ENCODE measurements at regions of chr6 and their contacts with region 1.

Region 1: GRCh38 chr6:41920921-41921711 is at the starts of genes BYSL and MED20:
- DNase-seq: peak; percentile 93 to 96
- ATAC-seq: peak; percentile 98 to 99 (median 98)
- H3K4me3 ChIP-seq: peak within 1 kb of the TSS; percentile 57 to 91 (median 76)
- H3K27ac ChIP-seq: peak within 1 kb of the TSS; percentile 92 to 99 (median 98)
- H3K4me1 ChIP-seq: peaks cover 0 to 50% (median 33%) of the 10 kb centered on the region in 9 donors
- H3K27me3 ChIP-seq: no peaks in the 10 kb centered on the region
- CTCF ChIP-seq: peak; percentile 97 to 100 (median 99)
- total RNA-seq, gene BYSL: 7.5 to 14.6 (median 9.9) TPM
- total RNA-seq, gene MED20: 12.6 to 21.5 (median 17.3) TPM

Region 2: DNA sequence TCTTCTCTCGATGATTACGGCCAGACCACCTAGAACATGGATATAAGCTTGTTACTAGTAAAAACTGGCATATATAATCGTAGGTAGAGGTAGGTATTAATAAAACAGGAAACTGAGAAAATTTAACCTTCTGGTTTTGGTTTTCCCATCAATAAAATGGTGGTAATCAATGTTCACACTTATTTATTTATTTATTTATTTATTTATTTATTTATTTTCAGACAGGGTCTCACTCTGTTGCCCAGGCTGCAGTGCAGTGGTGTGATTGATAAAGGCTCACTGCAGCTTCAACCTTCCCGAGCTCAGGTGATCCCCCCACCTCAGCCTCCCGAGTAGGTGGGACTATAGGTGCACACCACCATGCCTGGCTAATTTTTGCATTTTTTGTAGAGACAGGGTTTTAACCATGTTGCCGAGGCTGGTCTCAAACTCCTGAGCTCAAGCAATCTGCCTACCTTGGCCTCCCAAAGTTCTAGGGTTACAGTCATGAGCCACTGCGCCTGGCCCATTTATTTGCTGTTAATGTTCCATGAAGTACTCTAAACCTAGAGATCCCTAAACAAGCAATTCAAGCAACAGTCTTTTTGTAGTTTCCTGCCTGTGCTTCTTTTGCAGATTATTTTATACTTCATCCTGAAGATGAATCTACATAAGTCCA is 122.1 kb before region 1 on chr6:
- intact Hi-C with region 1: loop called in 1 of 10 experiments (anchors 5 kb)
- DNase-seq: no peak
- ATAC-seq: no peak
- H3K4me3 ChIP-seq: no peak overlapping the region
- H3K27ac ChIP-seq: no peak overlapping the region
- H3K4me1 ChIP-seq: peaks cover 0 to 14% (median 3%) of the 10 kb centered on the region in 9 donors
- H3K27me3 ChIP-seq: no peaks in the 10 kb centered on the region
- CTCF ChIP-seq: no peak

Region 3: DNA sequence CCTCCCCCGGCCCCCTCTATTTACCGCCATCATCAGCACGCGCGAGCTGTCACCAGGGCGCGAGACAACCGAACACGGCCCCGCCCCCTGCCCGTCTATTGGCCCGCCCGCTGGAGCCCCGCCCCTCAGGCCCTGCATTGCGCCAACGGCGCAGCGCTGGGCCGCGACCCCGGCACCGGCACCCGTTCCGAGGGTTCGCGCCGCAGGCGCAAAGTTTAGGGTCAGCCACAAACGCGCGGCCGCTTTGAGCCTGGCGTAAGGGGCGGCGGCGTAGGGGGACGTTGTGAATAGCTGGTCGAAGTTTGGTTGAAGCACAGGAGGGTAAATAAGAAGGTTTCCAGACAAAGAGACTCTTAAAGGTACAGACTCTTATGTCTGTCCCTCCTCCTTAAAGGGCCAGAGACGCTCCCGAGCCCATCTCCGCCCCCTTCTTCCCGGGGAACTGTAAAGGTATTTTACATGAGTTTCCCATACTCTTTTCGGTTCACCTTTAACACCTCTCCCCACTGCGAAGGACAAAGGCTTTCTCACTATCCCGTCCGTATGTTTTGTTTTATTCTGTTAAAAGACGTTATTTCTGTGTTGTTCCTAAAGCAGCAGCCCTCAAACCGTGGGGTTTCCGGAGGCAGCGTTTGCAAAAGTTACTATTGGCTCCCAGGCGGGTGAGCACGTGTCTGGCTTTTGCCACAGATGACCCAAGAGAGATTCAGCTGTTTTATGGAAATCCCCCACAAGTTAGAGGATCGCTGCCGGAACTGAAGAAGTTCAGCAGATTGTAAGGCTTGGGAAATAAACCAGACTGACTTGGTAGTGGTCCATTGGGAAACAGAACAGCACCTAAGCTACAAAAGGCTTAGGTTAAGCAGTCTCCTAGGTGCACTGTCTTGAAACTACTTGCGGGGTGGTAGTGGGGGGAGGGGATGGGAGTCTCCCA is 25.5 kb before region 1 on chr6 and contains the start of gene USP49:
- intact Hi-C with region 1: loop called in 1 of 10 experiments (anchors 2 kb)
- DNase-seq: peak; percentile 88 to 89
- ATAC-seq: peak; percentile 98 to 99 (median 98)
- H3K4me3 ChIP-seq: peak within 1 kb of the TSS; percentile 50 to 88 (median 72)
- H3K27ac ChIP-seq: peak within 1 kb of the TSS in 9 of 10 donors; percentile 53 to 94 (median 68)
- H3K4me1 ChIP-seq: peaks cover 0 to 34% (median 24%) of the 10 kb centered on the region in 9 donors
- H3K27me3 ChIP-seq: no peaks in the 10 kb centered on the region
- CTCF ChIP-seq: no peak
- total RNA-seq, gene USP49: 1.1 to 2.0 (median 1.7) TPM

Region 4: GRCh38 chr6:41936073-41936837 is 15.1 kb after region 1 on chr6:
- intact Hi-C with region 1: loop called in 1 of 10 experiments (anchors 2 kb)
- DNase-seq: peak; percentile 56 to 81
- ATAC-seq: peak; percentile 46 to 79 (median 70)
- H3K4me3 ChIP-seq: peak overlapping the region in 1 of 10 donors; percentile 11
- H3K27ac ChIP-seq: peak overlapping the region in 8 of 10 donors; percentile 11 to 94 (median 88)
- H3K4me1 ChIP-seq: peaks cover 26 to 64% (median 49%) of the 10 kb centered on the region in 9 donors
- H3K27me3 ChIP-seq: no peaks in the 10 kb centered on the region
- CTCF ChIP-seq: peak; percentile 67 to 85 (median 81)

Measured in heart right ventricle (tissue), 16 donors.